ENCODE measurements at regions of chr1 and their contacts with region 1.

Region 1: DNA sequence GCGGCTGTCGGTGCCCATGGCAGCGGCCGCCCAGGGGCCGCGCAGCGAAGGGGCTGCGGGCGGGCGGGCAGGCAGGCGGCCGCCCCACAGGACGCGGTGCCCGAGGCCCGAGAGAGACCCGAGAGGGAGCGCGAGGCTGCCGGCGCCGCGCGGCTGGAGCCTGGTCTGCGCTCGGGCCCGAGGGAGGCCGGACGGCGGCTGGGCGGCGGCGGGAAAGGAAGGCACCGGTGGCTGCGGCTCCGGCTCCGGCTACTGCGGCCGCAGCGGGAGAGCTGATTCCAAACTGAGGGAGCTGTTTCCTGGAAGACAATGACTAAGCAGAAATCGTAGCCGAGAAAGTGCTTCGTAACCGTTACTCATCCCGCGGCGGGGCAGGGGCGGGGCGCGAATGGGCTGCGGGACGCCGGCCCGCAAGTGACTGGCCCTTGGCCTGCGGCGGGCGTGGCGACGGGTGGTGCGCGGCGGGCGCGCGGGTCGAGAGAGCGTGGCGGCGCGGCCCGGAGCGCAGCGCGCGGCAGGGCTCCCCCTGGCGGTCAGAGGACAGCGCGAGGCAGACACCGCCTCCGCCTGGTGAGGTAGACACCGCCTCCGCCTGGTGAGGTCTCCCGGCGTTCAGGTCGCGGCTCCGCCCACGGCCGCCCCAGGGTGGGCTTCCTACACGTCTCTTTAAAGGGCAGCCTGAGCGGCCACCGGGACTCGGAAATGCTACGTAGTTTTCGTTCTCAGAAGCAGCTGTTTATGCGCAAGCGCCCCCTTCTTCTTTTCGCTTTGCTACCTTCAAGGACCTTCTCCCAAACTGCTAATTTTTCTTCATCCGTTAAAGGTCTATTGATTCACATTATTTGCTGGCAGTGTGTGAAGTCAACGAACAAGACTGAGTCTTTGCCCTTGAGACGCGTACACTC is at the start of gene GCLM:
- DNase-seq: peak; percentile 61
- H3K4me3 ChIP-seq: peak within 1 kb of the TSS; percentile 76
- CTCF ChIP-seq: peak; percentile 97

Region 2: DNA sequence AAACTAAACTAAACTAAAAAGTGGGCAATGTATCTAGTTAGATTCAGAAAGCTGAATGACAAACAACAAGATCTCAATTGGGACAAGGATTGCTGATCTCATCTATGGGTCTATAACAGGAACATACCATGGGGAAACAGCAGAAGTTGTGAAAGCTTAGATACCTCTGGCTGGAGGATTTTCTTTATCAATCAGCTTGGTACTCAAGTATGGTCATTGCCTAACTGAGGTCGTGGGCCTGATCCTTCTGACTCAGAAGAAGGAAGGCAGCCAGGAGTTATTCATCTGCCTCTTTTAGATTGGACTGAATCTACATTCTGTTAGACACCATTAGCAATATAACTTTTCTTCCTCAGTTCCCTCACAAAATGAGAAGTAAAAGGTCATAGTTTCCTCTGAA is 70.1 kb before region 1 on chr1:
- CTCF ChIA-PET with region 1: no interaction called
- POLR2A ChIA-PET with region 1: no interaction called
- DNase-seq: no peak
- H3K4me3 ChIP-seq: no peak overlapping the region
- CTCF ChIP-seq: no peak

Region 3: GRCh38 chr1:93878889-93879586 is 30.4 kb before region 1 on chr1 and contains the start of gene DNTTIP2:
- CTCF ChIA-PET with region 1: interaction called, 16 read pairs
- POLR2A ChIA-PET with region 1: interaction called, 3 read pairs
- DNase-seq: peak; percentile 46
- H3K4me3 ChIP-seq: peak within 1 kb of the TSS; percentile 94
- CTCF ChIP-seq: no peak

Region 4: DNA sequence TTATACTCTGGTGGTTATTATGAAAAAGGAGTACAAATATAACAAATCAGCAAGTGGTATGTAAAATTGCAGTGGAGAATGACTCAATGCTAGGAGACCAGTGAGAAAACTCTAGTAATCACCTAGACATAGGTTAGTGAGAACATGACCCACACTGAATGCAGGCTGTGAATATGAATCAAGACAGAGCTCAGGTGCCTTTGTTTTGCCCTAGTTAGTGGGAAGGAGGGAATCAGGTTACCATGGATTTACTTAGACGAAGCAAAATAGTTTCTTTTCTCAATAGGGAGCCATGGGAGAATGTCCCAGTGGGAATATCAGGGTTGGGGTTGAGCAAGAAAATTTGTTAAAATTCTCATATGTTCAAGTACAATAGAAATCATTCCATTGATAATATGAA is 10.4 kb after region 1 on chr1:
- CTCF ChIA-PET with region 1: interaction called, 49 read pairs
- POLR2A ChIA-PET with region 1: no interaction called
- DNase-seq: no peak
- H3K4me3 ChIP-seq: no peak overlapping the region
- CTCF ChIP-seq: no peak

Region 5: GRCh38 chr1:93969371-93969770 is 60.0 kb after region 1 on chr1:
- CTCF ChIA-PET with region 1: interaction called, 15 read pairs
- POLR2A ChIA-PET with region 1: no interaction called
- DNase-seq: no peak
- H3K4me3 ChIP-seq: no peak overlapping the region
- CTCF ChIP-seq: no peak

Region 6: DNA sequence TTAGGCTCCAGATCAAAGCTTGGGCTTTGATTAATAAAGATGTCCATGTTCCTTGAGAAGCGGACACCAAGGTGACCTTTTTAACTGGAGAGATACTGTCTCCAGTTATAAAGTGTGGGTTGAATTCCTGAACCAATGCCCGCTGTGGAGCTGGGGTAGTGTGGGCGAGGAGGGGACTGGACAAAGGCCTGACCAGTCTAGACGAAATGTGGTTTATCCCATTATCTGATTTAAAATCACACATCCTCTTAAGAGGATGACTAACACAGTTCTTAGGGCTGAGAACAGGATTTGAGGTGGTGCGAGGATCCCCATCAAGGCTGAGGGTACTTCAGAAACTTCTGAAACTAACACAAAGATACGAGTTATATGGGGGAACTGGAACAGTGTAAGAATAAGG is 84.3 kb after region 1 on chr1:
- CTCF ChIA-PET with region 1: interaction called, 12 read pairs
- POLR2A ChIA-PET with region 1: interaction called, 3 read pairs
- DNase-seq: no peak
- H3K4me3 ChIP-seq: no peak overlapping the region
- CTCF ChIP-seq: no peak

Region 7: GRCh38 chr1:94033849-94034248 is 124.5 kb after region 1 on chr1:
- CTCF ChIA-PET with region 1: interaction called, 10 read pairs
- POLR2A ChIA-PET with region 1: no interaction called
- DNase-seq: no peak
- H3K4me3 ChIP-seq: no peak overlapping the region
- CTCF ChIP-seq: no peak